Sciatic nerve (tissue), 2 donors: ENCODE measurements at regions of chr10 and their contacts with region 1.

Region 1: DNA sequence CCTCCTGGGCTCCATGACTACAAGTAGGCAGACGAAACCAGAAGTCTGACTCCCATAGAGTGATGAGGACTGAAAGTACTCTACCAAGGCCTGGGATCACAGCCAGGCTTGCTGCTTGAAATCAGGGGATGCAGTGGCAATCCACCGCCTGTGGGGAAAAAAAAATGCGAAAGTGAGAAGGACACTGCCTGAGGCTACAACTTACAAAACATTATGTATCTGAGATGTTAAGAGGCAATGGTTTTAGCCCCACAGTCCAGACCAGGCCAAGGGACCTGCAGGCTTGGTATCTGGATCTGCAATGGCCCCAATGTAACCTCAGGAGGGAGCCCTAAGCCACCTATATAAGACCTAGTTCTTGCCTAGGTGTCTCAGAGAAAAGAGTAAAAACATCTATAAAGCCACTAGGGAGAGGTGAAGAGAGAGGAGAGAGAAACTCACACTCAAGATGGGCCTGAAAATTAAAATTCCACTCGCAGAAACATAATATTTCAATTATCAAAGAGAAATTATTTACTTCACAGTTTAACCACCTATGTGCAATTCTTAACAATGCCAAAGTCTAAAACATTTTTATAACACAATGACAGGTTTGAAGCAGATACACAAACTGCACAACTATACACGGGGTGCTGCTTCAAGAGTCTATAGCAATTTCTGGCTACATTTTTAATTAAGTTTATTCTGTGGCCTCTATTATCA is 13.9 kb downstream of the DNAJC1 start:
- DNase-seq: no peak
- ATAC-seq: peak; percentile 62

Region 2: DNA sequence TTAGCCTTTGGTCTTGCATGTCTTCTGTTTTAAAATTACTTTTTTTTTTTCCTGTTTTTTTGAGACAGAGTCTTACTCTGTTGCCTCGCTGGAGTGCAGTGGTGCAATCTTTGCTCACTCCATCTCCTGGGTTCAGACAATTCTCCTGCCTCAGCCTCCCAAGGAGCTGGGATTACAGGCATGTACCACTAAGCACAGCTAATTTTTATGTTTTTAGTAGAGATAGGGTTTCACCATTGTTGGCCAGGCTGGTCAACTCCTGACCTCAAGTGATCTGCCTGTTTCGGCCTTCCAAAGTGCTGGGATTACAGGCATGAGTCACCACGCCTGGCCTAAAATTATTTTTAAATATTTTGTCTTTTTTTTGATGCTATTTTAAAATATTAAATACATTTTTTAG is 417.0 kb before region 1 on chr10:
- intact Hi-C with region 1: loop called (anchors 10 kb)
- DNase-seq: no peak
- ATAC-seq: peak; percentile 91

Region 3: GRCh38 chr10:22988581-22989360 is 999.2 kb after region 1 on chr10:
- intact Hi-C with region 1: loop called (anchors 5 kb)
- DNase-seq: peak; percentile 74
- ATAC-seq: peak; percentile 84